Dorsolateral prefrontal cortex (tissue), 120 donors: ENCODE measurements at regions of chr14 and their contacts with region 1.

Region 1: GRCh38 chr14:62126879-62127478 is 364.8 kb downstream of the SNAPC1 start:
- DNase-seq: no peak
- H3K4me3 ChIP-seq: peak overlapping the region in 4 of 59 donors; percentile 8 to 26 (median 12)
- H3K27ac ChIP-seq: no peak overlapping the region
- H3K27me3 ChIP-seq: peaks cover 0 to 35% (median 0%) of the 10 kb centered on the region in 45 donors
- CTCF ChIP-seq: peak; percentile 43 to 95 (median 84)

Region 2: DNA sequence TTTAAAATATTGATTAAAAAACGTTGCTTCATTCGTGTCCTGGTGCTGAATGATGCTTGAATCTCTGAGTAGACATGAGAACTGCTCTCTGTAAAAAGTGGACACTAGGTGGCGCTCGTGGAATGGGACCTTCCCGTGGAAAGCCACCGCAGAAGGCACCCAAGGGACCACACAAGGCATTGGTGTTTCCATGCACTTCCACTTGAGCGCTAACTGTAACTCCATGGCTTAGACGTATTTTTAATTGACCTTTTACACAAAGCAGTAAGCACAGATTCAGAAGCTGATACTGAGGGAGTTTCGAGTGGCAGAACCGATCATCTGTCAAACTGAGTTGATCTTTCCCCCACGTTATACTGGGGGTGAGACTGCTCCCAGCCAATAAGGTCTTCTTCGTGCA is 670.3 kb before region 1 on chr14:
- intact Hi-C with region 1: loop called (anchors 5 to 10 kb)
- DNase-seq: peak; percentile 50 to 92 (median 79)
- H3K4me3 ChIP-seq: no peak overlapping the region
- H3K27ac ChIP-seq: no peak overlapping the region
- H3K27me3 ChIP-seq: peaks cover 0 to 3% (median 0%) of the 10 kb centered on the region in 45 donors
- CTCF ChIP-seq: peak; percentile 83 to 98 (median 92)

Region 3: DNA sequence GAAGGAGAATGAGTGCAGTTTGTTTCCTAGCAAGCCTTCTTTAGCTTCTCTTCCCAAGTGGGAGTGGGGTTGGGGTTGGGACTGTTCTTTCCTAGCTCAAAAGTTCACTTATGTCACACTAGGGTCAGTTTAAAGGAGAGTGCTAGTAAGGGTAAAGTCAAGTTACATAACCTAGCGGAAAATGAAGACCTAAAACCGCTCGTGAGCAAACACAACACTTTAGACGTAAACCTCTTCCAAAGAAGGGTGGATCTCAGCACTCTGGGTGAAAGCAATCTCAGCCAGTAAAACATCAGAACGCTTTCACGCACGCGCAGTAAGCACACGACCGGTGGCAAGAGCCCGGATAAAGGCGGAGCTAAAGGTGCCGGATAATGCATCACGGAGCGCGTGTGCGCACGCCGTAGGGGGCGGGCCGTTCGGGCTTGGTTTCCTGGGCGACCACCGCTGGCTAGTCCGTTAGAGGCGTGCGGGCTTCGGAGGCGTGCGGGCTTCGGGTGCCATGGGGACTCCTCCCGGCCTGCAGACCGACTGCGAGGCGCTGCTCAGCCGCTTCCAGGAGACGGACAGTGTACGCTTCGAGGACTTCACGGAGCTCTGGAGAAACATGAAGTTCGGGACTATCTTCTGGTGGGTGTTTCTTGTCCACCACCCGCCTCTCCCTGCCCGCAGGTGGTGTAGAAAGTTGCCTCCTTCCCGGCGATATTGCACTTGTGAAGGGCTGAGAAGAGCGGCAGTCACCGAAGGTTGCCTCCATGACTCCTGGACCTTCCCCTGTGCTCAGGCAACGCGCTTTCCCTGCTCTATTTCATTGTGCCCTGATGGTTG is 364.8 kb before region 1 on chr14 and contains the start of gene SNAPC1:
- intact Hi-C with region 1: loop called in 1 of 2 experiments (anchors 5 kb)
- DNase-seq: peak; percentile 91 to 97 (median 96)
- H3K4me3 ChIP-seq: peak within 1 kb of the TSS; percentile 62 to 95 (median 84)
- H3K27ac ChIP-seq: peak within 1 kb of the TSS; percentile 59 to 96 (median 90)
- H3K27me3 ChIP-seq: peaks cover 0 to 5% (median 0%) of the 10 kb centered on the region in 45 donors
- CTCF ChIP-seq: peak in 25 of 56 donors; percentile 8 to 51 (median 27)
- total RNA-seq, gene SNAPC1: 2.2 to 6.6 (median 4.4) TPM

Region 4: GRCh38 chr14:61894452-61895077 is 232.4 kb before region 1 on chr14:
- intact Hi-C with region 1: loop called in 1 of 2 experiments (anchors 5 kb)
- DNase-seq: peak in 8 of 10 donors; percentile 50 to 75 (median 66)
- H3K4me3 ChIP-seq: no peak overlapping the region
- H3K27ac ChIP-seq: peak overlapping the region in 2 of 59 donors; percentile 2 to 42
- H3K27me3 ChIP-seq: no peaks in the 10 kb centered on the region
- CTCF ChIP-seq: peak; percentile 43 to 77 (median 65)

Region 5: GRCh38 chr14:61925043-61925442 is 201.9 kb before region 1 on chr14:
- intact Hi-C with region 1: loop called (anchors 2 to 10 kb)
- DNase-seq: peak in 2 of 10 donors; percentile 27 to 28
- H3K4me3 ChIP-seq: peak overlapping the region in 1 of 59 donors; percentile 9
- H3K27ac ChIP-seq: no peak overlapping the region
- H3K27me3 ChIP-seq: peaks cover 0 to 2% (median 0%) of the 10 kb centered on the region in 45 donors
- CTCF ChIP-seq: peak in 54 of 56 donors; percentile 17 to 71 (median 43)

Region 6: GRCh38 chr14:61965030-61965745 is 161.8 kb before region 1 on chr14:
- intact Hi-C with region 1: no loop called
- DNase-seq: no peak
- H3K4me3 ChIP-seq: no peak overlapping the region
- H3K27ac ChIP-seq: no peak overlapping the region
- H3K27me3 ChIP-seq: no peaks in the 10 kb centered on the region
- CTCF ChIP-seq: no peak

Region 7: GRCh38 chr14:62501021-62501750 is 374.2 kb after region 1 on chr14:
- intact Hi-C with region 1: no loop called
- DNase-seq: no peak
- H3K4me3 ChIP-seq: no peak overlapping the region
- H3K27ac ChIP-seq: no peak overlapping the region
- H3K27me3 ChIP-seq: peaks cover 0 to 9% (median 0%) of the 10 kb centered on the region in 45 donors
- CTCF ChIP-seq: no peak